Dendritic cell treated with granulocyte-macrophage colony-stimulating factor and Interleukin-4, amounts not matched to agents 40 ng/mL and 50 ng/mL, for 4 days (primary cell): ENCODE measurements at regions of chr6 and their contacts with region 1.

Region 1: GRCh38 chr6:79813854-79814709 is 133.3 kb downstream of the ELOVL4 start:
- H3K4me3 Mint-ChIP-seq: no peak overlapping the region
- H3K27ac Mint-ChIP-seq: no peak overlapping the region
- H3K4me1 Mint-ChIP-seq: peaks cover 19% of the 10 kb centered on the region
- H3K27me3 Mint-ChIP-seq: peaks cover 19% of the 10 kb centered on the region

Region 2: DNA sequence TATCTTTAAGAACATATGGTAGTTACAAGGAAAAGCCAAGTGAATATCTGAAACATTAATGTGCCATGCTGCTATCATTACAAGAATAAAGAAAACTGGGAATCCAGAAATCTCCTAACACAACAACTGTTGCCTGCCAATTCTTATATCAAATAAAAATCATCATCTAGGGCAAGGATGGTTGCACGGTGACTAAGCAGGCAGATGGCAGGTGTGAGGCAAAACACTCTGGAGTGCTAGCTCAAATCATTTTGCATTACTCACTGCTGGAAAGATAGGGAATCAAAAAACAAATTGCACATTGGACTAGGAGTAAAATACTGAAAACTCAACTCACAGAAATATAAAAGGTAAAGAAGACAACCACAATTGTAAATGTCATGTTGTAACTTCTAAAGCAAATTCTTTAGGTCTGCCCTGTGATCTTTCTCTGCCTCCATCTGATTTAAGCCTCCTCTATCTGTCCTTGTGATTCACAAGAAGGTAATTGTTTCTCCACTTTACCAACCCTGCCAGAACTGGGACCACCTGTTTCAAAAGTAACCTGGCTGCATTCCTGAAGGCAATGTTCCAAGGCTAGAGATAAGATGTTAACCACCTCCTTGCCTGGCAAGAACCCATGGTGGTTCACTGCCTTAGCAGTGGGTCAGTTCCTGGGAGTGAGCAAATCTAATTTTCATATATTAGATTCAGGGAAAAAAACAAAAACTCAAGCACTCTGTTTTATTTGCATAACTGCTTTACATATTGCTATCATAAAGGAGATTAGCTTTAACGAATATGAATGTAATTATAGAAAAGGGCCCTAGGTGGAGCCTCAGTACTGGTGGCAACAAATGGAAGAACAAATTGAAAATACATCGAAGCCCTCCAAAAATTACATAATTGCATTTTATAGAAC is 243.7 kb before region 1 on chr6:
- intact Hi-C with region 1: loop called (anchors 2 kb)
- H3K4me3 Mint-ChIP-seq: peak overlapping the region; percentile 26
- H3K27ac Mint-ChIP-seq: no peak overlapping the region
- H3K4me1 Mint-ChIP-seq: no peaks in the 10 kb centered on the region
- H3K27me3 Mint-ChIP-seq: no peaks in the 10 kb centered on the region

Region 3: DNA sequence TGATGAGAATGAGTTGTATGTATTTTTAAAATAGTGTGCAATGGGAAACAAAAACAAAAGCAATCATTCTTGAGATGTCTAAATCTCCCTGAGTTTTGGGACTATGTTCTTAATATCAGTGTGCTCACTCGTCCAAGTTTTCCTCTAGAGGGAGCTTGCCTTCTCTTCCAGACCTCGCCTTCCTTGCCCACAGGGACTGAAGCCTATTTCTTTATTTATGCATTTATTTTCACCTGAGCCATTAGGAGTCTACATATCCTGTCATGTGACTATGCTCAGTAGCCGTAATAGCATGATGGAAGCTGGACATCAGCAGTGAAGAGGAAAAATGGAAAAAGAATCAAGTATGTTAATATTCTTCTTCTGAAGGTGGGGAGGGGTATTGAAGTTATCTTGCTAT is 51.7 kb before region 1 on chr6:
- intact Hi-C with region 1: loop called (anchors 5 kb)
- H3K4me3 Mint-ChIP-seq: no peak overlapping the region
- H3K27ac Mint-ChIP-seq: no peak overlapping the region
- H3K4me1 Mint-ChIP-seq: no peaks in the 10 kb centered on the region
- H3K27me3 Mint-ChIP-seq: peaks cover 8% of the 10 kb centered on the region